ENCODE measurements at regions of chr11 and their contacts with region 1.

Region 1: GRCh38 chr11:85595285-85595884 is 31.8 kb downstream of the DLG2 start:
- DNase-seq: no peak
- ATAC-seq: peak in 3 of 4 donors; percentile 53 to 85 (median 80)
- H3K4me3 ChIP-seq: no peak overlapping the region
- H3K27ac ChIP-seq: no peak overlapping the region
- H3K4me1 ChIP-seq: no peaks in the 10 kb centered on the region
- H3K27me3 ChIP-seq: no peaks in the 10 kb centered on the region
- CTCF ChIP-seq: peak; percentile 74

Region 2: DNA sequence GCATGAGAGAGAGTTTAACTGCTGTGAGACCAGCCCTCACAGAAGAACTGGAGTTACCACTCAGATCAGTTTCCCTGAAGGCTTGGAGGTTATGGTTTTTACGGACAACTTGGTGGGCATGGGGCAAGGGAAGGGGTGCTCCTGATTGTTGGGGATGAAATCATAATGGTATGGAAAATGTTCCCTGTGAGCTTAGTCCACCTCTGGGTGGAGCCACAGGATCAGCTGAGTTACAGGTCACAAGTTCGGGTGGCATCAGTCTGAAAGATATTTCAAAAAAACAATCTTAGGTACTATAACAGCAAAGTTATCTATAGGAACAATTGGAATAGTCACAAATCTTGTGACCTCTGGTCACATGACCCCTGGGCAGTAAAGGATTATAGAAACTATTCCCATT is 131.1 kb before region 1 on chr11:
- intact Hi-C with region 1: loop called in 1 of 2 experiments (anchors 5 kb)
- DNase-seq: no peak
- ATAC-seq: peak in 1 of 4 donors; percentile 50
- H3K4me3 ChIP-seq: no peak overlapping the region
- H3K27ac ChIP-seq: no peak overlapping the region
- H3K4me1 ChIP-seq: no peaks in the 10 kb centered on the region
- H3K27me3 ChIP-seq: no peaks in the 10 kb centered on the region
- CTCF ChIP-seq: peak; percentile 38

Region 3: DNA sequence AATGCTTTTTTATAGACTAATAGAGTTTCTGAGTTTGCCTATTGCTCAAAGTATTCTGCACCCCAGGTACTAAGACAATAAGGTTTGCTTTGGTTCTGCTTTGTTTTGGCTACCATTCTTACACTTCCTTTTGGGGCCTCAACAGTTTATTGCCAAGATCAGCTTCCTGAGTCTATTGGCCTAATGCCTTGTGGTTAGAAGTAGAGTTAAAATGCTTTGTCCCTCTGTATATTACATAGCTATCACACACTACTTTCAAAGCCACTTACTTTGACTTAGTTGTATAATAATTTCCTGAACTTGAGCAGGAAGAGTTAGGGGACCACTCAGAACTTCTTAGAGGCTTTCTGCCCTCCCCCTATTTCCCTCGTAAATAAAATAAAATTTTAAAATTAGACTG is 64.8 kb before region 1 on chr11:
- intact Hi-C with region 1: no loop called
- DNase-seq: no peak
- ATAC-seq: no peak
- H3K4me3 ChIP-seq: no peak overlapping the region
- H3K27ac ChIP-seq: no peak overlapping the region
- H3K4me1 ChIP-seq: peaks cover 13% of the 10 kb centered on the region
- H3K27me3 ChIP-seq: no peaks in the 10 kb centered on the region
- CTCF ChIP-seq: no peak

Region 4: DNA sequence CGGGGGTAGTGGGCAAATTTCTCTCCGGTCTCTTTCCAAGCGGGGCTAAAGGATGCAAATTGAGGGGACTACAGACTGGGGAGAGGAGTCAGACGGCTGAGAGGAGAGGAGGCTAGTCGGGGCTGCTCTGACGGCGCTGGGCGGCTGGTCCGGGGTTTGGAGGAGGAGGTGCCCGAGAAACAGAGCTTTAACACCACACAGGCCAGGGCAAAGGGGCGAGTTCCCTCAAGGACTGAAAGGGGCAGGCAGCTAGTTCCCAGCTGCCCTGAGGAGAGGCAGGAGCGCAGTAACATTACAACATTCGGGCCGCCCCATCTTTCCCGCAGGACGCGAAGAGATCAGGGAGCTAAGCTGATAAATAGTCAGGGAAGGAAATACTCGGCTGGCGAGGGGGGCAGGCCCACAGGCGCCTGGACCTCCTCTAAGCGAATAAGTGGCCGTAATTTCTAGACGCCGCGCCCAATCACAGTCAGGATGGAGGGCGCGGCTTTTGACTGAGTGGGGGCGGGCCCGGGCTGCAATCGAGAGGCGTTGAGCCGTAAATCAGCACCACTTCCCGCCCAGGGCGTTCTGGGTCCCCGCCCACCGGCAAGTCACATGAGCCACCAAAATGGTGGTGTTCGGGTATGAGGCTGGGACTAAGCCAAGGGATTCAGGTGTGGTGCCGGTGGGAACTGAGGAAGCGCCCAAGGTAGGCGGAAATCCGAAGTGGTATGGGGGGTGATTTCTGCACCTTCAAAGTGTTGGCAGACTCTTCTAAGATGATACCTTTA is 32.8 kb after region 1 on chr11 and contains the start of gene TMEM126B:
- intact Hi-C with region 1: loop called in 1 of 2 experiments (anchors 1 kb)
- DNase-seq: peak; percentile 98 to 99
- ATAC-seq: peak; percentile 97 to 99 (median 98)
- H3K4me3 ChIP-seq: peak within 1 kb of the TSS; percentile 89
- H3K27ac ChIP-seq: peak within 1 kb of the TSS; percentile 86
- H3K4me1 ChIP-seq: peaks cover 28% of the 10 kb centered on the region
- H3K27me3 ChIP-seq: no peaks in the 10 kb centered on the region
- CTCF ChIP-seq: no peak
- total RNA-seq, gene TMEM126B: 20.0 to 33.3 (median 25.2) TPM

Region 5: GRCh38 chr11:85647604-85648299 is 52.4 kb after region 1 on chr11 and contains the start of gene TMEM126A:
- intact Hi-C with region 1: loop called in 1 of 2 experiments (anchors 10 kb)
- DNase-seq: peak; percentile 91 to 94
- ATAC-seq: peak; percentile 96 to 98 (median 98)
- H3K4me3 ChIP-seq: peak within 1 kb of the TSS; percentile 78
- H3K27ac ChIP-seq: peak within 1 kb of the TSS; percentile 87
- H3K4me1 ChIP-seq: peaks cover 33% of the 10 kb centered on the region
- H3K27me3 ChIP-seq: no peaks in the 10 kb centered on the region
- CTCF ChIP-seq: no peak
- total RNA-seq, gene TMEM126A: 32.4 to 51.5 (median 39.1) TPM

Region 6: DNA sequence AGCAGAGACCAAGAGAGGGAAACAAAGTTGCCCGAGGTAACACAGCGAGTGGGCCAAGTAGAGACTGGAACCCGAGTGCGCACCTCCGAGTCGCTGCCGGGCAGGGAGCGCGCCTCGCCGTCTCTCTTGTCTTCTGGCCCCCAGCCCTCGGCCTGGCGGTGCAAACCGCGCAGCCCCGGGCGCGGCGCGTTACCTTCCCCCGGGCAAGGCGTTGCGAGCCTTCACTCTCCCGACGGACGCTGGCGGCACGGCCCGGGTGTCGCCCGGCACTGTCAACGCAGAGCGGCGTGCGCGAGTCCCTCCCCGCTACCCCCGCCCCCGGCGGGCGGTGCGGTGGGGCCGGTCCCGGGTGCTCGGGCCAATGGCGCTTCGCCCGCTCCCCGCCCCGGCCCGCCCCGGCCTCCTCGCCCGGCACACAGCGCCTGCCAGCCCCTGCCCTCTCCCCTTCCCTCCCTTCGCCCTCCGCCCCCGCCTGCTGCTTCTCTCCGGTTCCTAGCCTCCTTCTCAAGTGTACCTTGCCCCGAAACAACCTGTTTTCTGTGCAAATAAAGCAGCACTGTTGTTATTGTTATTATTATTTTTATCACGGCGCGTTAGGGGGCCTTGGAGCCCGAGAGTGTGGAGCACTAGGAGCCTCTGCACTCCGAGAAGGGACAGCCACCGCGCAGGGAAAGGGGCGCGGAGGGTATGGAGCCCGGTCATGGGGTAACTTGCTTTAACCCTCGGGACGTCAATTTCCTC is 215.7 kb after region 1 on chr11 and contains the start of gene SYTL2:
- intact Hi-C with region 1: loop called in 1 of 2 experiments (anchors 10 kb)
- DNase-seq: peak; percentile 74 to 85
- ATAC-seq: peak; percentile 93 to 98 (median 96)
- H3K4me3 ChIP-seq: peak within 1 kb of the TSS; percentile 79
- H3K27ac ChIP-seq: peak within 1 kb of the TSS; percentile 26
- H3K4me1 ChIP-seq: no peaks in the 10 kb centered on the region
- H3K27me3 ChIP-seq: no peaks in the 10 kb centered on the region
- CTCF ChIP-seq: peak; percentile 8
- total RNA-seq, gene SYTL2: 3.2 to 5.6 (median 5.1) TPM

Region 7: GRCh38 chr11:86218125-86219084 is 623.0 kb after region 1 on chr11:
- intact Hi-C with region 1: loop called in 1 of 2 experiments (anchors 10 kb)
- DNase-seq: peak; percentile 56 to 76
- ATAC-seq: peak; percentile 84 to 99 (median 94)
- H3K4me3 ChIP-seq: peak overlapping the region; percentile 40
- H3K27ac ChIP-seq: no peak overlapping the region
- H3K4me1 ChIP-seq: no peaks in the 10 kb centered on the region
- H3K27me3 ChIP-seq: no peaks in the 10 kb centered on the region
- CTCF ChIP-seq: peak; percentile 94